OCI-LY7 (cell line): ENCODE measurements at regions of chr15 and their contacts with region 1.

Region 1: GRCh38 chr15:73633111-73633990 is at the start of gene NPTN:
- DNase-seq: peak; percentile 98
- H3K4me3 ChIP-seq: peak within 1 kb of the TSS; percentile 96
- H3K27ac ChIP-seq: no peak within 1 kb of the TSS
- H3K4me1 ChIP-seq: peaks cover 43% of the 10 kb centered on the region
- CTCF ChIP-seq: 0 out of 2 replicates have a peak, but pooled peaks have one; percentile 11
- total RNA-seq, gene NPTN: 36.0 and 41.5 TPM in 2 replicates

Region 2: GRCh38 chr15:73284090-73284716 is 349.1 kb before region 1 on chr15:
- CTCF ChIA-PET with region 1: no interaction called
- POLR2A ChIA-PET with region 1: no interaction called
- intact Hi-C with region 1: loop called (anchors 10 kb)
- DNase-seq: peak; percentile 16
- H3K4me3 ChIP-seq: no peak overlapping the region
- H3K27ac ChIP-seq: no peak overlapping the region
- H3K4me1 ChIP-seq: peaks cover 10% of the 10 kb centered on the region
- CTCF ChIP-seq: peak; percentile 64

Region 3: DNA sequence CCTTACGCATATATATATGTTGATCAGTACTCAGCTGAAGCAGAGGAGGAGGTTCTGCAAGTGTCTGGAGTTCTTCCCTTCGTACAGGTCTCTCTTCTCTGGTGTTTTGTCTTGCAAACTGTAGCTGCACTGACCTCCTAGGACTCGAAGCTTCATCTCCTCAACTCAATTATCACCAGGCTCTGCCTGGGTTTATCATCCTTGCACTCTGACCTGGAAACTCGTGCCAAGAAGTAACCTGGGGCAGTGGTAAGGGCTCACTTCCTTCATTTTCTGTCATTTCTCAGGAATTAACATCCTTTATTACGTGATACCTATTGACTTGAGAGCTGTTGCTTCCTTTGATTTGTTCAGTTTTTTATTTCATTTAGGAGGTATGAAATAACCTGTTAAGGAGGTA is 176.0 kb before region 1 on chr15:
- CTCF ChIA-PET with region 1: no interaction called
- POLR2A ChIA-PET with region 1: no interaction called
- intact Hi-C with region 1: no loop called
- DNase-seq: no peak
- H3K4me3 ChIP-seq: no peak overlapping the region
- H3K27ac ChIP-seq: no peak overlapping the region
- H3K4me1 ChIP-seq: no peaks in the 10 kb centered on the region
- CTCF ChIP-seq: no peak

Region 4: DNA sequence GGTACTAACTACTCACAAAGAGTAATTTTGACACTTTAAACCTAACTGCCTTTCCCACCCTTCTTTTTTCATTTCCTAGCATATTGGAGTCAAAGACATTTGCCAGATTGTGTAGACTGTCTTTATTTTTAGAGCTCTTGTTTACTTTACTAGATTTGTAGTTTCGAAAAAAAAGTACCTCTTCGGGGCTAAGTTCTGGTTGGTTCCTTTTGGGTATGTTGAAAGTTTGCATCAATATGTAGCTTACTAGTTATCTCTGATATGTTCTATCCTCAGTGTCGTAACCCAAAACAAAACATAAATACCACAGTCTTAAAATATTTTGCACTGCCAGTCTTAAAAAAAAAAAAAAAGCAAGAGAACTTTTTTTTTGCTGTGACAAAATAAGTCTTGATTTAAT is 138.2 kb before region 1 on chr15:
- CTCF ChIA-PET with region 1: no interaction called
- POLR2A ChIA-PET with region 1: no interaction called
- intact Hi-C with region 1: no loop called
- DNase-seq: no peak
- H3K4me3 ChIP-seq: no peak overlapping the region
- H3K27ac ChIP-seq: no peak overlapping the region
- H3K4me1 ChIP-seq: no peaks in the 10 kb centered on the region
- CTCF ChIP-seq: no peak

Region 5: DNA sequence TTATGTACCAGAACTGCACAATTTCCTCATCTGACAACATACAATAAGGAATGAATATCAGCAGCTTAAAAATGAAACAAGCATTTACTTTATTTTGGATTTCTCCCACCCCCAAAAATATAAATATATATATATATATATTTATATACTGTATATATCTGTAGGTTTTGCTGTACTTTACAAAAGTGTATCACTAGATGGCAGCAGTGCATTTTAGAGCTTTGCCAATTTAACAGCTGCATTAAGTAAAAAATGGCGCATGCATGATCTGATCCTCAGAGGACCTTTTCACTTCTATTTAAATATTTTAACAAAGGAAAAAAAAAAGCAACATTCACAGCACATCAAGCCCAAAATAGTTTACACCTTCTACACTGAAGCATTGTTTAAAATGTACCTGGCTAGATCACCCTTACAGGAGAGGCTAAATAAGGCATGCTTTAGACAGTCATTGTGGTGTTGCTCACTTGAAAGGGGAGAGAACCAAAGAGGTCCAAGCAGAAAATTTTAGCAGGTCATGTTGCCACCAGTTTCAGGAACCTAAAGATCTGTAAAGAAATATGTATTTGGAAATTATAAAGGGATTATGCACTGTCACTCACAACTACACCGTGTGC is 72.7 kb before region 1 on chr15:
- CTCF ChIA-PET with region 1: interaction called, 3 read pairs
- POLR2A ChIA-PET with region 1: interaction called, 8 read pairs
- intact Hi-C with region 1: loop called (anchors 1 kb)
- DNase-seq: peak; percentile 68
- H3K4me3 ChIP-seq: no peak overlapping the region
- H3K27ac ChIP-seq: no peak overlapping the region
- H3K4me1 ChIP-seq: no peaks in the 10 kb centered on the region
- CTCF ChIP-seq: peak; percentile 77

Region 6: GRCh38 chr15:73617301-73617831 is 16.0 kb before region 1 on chr15:
- CTCF ChIA-PET with region 1: interaction called, 3 read pairs
- POLR2A ChIA-PET with region 1: interaction called, 57 read pairs
- intact Hi-C with region 1: no loop called
- DNase-seq: no peak
- H3K4me3 ChIP-seq: no peak overlapping the region
- H3K27ac ChIP-seq: no peak overlapping the region
- H3K4me1 ChIP-seq: no peaks in the 10 kb centered on the region
- CTCF ChIP-seq: no peak